CD14-positive monocyte (primary cell): ENCODE measurements at regions of chr18 and their contacts with region 1.

Region 1: GRCh38 chr18:75438891-75439290 is 11.4 kb upstream of the SMIM21 start:
- DNase-seq: no peak
- H3K4me3 ChIP-seq: no peak overlapping the region
- H3K4me3 Mint-ChIP-seq: no peak overlapping the region
- H3K27ac ChIP-seq: no peak overlapping the region
- H3K27ac Mint-ChIP-seq: no peak overlapping the region
- H3K4me1 ChIP-seq: no peaks in the 10 kb centered on the region
- H3K4me1 Mint-ChIP-seq: no peaks in the 10 kb centered on the region
- H3K27me3 ChIP-seq: peaks cover 2% of the 10 kb centered on the region in 2 donors
- H3K27me3 Mint-ChIP-seq: peaks cover 3 to 8% (median 8%) of the 10 kb centered on the region in 3 donors
- CTCF ChIP-seq: no peak

Region 2: DNA sequence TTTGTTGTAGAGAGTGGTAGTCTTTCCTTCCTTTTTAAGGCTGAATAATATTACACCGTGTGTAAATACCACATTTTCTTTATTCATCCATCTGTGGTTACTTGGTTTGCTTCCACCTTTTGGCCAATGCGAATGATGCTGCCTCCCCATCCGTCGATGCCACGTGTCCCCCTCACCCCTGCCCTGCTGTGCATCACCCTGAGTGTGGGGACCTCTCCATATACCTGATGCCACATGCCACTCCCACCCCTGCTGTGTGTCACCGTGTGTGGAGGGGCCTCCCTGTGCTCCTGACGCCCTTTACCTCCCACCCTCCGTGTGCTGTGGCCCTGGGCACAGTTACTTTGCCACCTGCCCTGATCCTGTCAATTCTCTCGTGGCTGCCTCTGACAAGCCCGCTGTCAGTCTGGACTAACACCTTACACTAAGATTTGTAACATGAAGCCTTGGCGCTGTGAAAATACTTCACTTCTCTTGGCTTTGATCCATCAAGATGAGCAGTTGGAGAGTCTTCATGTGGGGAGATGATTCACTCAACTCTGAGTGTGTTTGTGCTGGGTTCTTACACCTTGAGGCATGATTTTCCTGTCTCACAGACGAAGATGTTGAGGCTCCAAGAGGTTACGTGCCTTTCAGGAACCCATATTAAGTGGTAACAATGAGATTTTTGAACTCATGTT is 607.2 kb before region 1 on chr18:
- intact Hi-C with region 1: loop called in 1 of 2 experiments (anchors 5 kb)
- DNase-seq: no peak
- H3K4me3 ChIP-seq: no peak overlapping the region
- H3K4me3 Mint-ChIP-seq: no peak overlapping the region
- H3K27ac ChIP-seq: no peak overlapping the region
- H3K27ac Mint-ChIP-seq: peak overlapping the region in 1 of 7 donors; percentile 73
- H3K4me1 ChIP-seq: no peaks in the 10 kb centered on the region
- H3K4me1 Mint-ChIP-seq: peaks cover 5% of the 10 kb centered on the region
- H3K27me3 ChIP-seq: no peaks in the 10 kb centered on the region
- H3K27me3 Mint-ChIP-seq: peaks cover 0 to 4% (median 0%) of the 10 kb centered on the region in 3 donors
- CTCF ChIP-seq: no peak

Region 3: GRCh38 chr18:75400366-75400765 is 38.5 kb before region 1 on chr18:
- intact Hi-C with region 1: no loop called
- DNase-seq: no peak
- H3K4me3 ChIP-seq: no peak overlapping the region
- H3K4me3 Mint-ChIP-seq: no peak overlapping the region
- H3K27ac ChIP-seq: no peak overlapping the region
- H3K27ac Mint-ChIP-seq: no peak overlapping the region
- H3K4me1 ChIP-seq: no peaks in the 10 kb centered on the region
- H3K4me1 Mint-ChIP-seq: no peaks in the 10 kb centered on the region
- H3K27me3 ChIP-seq: no peaks in the 10 kb centered on the region
- H3K27me3 Mint-ChIP-seq: peaks cover 5 to 10% (median 6%) of the 10 kb centered on the region in 3 donors
- CTCF ChIP-seq: no peak